HepG2 (cell line): ENCODE measurements at regions of chr5 and their contacts with region 1.

Region 1: DNA sequence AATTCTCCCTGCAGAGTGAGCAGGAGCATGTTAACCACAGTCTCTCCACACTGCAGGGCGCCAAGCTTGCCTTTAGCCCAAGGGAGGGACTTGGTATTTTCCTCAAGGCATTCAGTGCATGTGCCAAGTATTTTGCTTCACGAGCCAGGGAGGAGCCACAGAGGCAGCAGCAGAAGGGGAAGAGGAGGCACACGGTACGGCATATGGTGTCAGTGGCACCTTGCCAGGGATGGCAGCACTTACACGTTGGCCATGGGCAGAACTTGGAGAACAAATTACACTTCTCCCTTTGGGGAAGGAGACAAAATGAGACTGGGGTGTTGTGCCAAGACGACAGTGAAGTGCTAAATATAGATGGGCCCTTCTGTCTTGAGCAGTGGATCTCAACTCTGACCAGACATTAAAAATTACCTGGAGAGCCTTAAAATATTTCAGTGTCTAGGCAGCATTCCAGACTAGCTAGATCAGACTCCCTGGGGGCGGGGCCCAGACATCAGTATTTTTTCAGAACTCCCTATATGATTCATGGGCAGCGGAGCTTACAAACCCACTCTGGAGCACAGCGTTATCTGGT is 155.8 kb downstream of the DRD1 start:
- DNase-seq: no peak
- ATAC-seq: no peak
- H3K4me3 ChIP-seq: no peak overlapping the region
- H3K27ac ChIP-seq: no peak overlapping the region
- H3K4me1 ChIP-seq: no peaks in the 10 kb centered on the region
- H3K27me3 ChIP-seq: no peaks in the 10 kb centered on the region; a peak in 1 of 5 replicates
- CTCF ChIP-seq: no peak
- EP300 ChIP-seq: no peak
- POLR2A ChIP-seq: no peak
- RAD21 ChIP-seq: no peak

Region 2: GRCh38 chr5:174514983-174515394 is 773.1 kb before region 1 on chr5:
- CTCF ChIA-PET with region 1: no interaction called
- POLR2A ChIA-PET with region 1: no interaction called
- in situ Hi-C with region 1: no loop called
- intact Hi-C with region 1: loop called (anchors 10 kb)
- DNase-seq: no peak
- ATAC-seq: no peak
- H3K4me3 ChIP-seq: no peak overlapping the region
- H3K27ac ChIP-seq: no peak overlapping the region
- H3K4me1 ChIP-seq: peaks cover 6% of the 10 kb centered on the region; the same call in 1 of the 2 replicates
- H3K27me3 ChIP-seq: no peaks in the 10 kb centered on the region
- CTCF ChIP-seq: no peak
- EP300 ChIP-seq: no peak
- POLR2A ChIP-seq: no peak
- RAD21 ChIP-seq: no peak

Region 3: DNA sequence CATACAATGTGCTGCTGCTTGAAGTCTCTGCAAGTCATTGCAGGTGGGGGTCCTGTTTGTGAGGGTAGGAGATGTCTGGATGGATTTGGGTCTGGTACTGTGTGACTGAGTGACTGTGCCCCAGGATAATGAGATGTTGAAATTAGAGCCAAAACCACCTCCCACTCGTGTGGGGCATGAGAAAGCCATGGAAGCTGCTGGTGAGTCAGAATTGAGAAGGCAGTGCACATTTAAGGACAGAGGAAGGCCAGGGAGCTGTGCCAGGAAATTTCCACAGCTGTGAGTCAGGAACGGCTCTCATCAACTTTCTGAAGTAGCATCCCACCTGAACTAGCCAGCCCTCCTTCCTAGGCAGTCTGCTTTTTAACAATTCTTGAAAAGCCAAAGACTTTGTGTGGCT is 74.0 kb before region 1 on chr5:
- CTCF ChIA-PET with region 1: no interaction called
- POLR2A ChIA-PET with region 1: no interaction called
- in situ Hi-C with region 1: no loop called
- intact Hi-C with region 1: no loop called
- DNase-seq: no peak
- ATAC-seq: no peak
- H3K4me3 ChIP-seq: no peak overlapping the region
- H3K27ac ChIP-seq: no peak overlapping the region
- H3K4me1 ChIP-seq: no peaks in the 10 kb centered on the region
- H3K27me3 ChIP-seq: peaks cover 2 to 11% of the 10 kb centered on the region in 2 experiments; a peak in 2 of 5 replicates
- CTCF ChIP-seq: no peak
- EP300 ChIP-seq: no peak
- POLR2A ChIP-seq: no peak
- RAD21 ChIP-seq: no peak